ENCODE measurements at regions of chr6 and their contacts with region 1.

Region 1: DNA sequence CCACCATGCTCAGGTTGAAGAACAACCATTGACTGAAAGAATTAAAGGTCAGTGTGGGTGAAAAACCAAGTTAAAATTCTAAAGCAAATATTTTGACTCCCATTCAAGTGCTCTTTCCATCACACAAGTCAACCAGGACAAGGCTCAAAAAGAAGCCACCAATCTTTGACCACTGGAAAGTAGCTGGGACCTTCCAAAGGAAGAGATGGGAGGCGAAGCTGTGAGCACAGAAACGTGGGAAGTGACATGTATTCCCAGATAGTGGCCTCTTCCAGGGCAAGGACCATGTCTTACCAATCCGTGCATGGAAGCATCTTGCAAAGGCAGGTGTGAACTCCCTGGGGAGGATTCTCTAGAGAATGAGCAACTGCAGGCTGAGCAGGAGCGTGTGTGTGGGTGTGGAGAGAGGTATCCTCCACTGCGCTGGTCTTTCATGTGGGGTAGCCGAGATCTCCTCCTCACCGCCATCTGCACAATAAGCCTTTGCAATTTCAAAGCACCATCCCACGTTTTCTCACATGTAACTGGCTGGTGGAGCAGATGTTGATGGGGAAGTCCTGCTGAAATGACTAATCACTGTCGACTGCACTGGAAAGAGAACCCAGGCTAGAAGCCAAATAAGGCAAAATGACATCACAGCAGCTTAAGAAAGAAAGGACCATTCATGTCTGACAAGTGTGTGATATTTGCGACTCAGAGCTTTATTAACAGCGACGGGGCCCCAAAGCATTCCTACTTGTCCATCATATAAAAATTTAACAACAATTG is 189.4 kb upstream of the RREB1 start:
- DNase-seq: peak; percentile 91
- ATAC-seq: peak; percentile 96
- H3K4me3 ChIP-seq: no peak overlapping the region
- H3K27ac ChIP-seq: peak overlapping the region; percentile 30; the same call in 1 of the 2 replicates
- H3K4me1 ChIP-seq: peaks cover 27% of the 10 kb centered on the region
- H3K27me3 ChIP-seq: no peaks in the 10 kb centered on the region
- CTCF ChIP-seq: no peak
- EP300 ChIP-seq: peak; percentile 99
- POLR2A ChIP-seq: no peak
- RAD21 ChIP-seq: peak; percentile 31; the same call in 1 of the 2 replicates

Region 2: DNA sequence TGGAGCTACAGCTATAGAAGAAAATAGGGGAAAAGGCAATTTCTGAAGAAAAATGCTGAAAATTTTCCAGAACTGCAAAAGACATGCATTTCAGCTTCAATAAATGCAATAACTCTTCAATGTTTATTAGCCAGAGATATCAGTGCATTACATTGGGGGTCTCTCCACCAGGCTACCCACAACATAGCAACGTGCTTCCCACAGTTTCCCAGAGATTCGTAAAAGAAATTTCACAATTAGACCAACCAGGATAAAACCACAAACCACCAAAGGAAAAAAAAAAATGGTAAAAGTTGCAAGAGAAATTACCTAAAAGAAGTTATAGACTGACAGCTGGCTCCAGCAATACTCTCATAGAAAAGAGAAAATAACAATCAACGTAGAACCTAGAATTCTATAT is 313.8 kb before region 1 on chr6:
- CTCF ChIA-PET with region 1: no interaction called
- POLR2A ChIA-PET with region 1: no interaction called
- RAD21 ChIA-PET with region 1: no interaction called
- SMC1A ChIA-PET with region 1: no interaction called
- in situ Hi-C with region 1: no loop called
- intact Hi-C with region 1: no loop called
- DNase-seq: no peak
- ATAC-seq: no peak
- H3K4me3 ChIP-seq: no peak overlapping the region
- H3K27ac ChIP-seq: no peak overlapping the region
- H3K4me1 ChIP-seq: peaks cover 6% of the 10 kb centered on the region
- H3K27me3 ChIP-seq: no peaks in the 10 kb centered on the region
- CTCF ChIP-seq: no peak
- EP300 ChIP-seq: no peak
- POLR2A ChIP-seq: no peak
- RAD21 ChIP-seq: no peak

Region 3: DNA sequence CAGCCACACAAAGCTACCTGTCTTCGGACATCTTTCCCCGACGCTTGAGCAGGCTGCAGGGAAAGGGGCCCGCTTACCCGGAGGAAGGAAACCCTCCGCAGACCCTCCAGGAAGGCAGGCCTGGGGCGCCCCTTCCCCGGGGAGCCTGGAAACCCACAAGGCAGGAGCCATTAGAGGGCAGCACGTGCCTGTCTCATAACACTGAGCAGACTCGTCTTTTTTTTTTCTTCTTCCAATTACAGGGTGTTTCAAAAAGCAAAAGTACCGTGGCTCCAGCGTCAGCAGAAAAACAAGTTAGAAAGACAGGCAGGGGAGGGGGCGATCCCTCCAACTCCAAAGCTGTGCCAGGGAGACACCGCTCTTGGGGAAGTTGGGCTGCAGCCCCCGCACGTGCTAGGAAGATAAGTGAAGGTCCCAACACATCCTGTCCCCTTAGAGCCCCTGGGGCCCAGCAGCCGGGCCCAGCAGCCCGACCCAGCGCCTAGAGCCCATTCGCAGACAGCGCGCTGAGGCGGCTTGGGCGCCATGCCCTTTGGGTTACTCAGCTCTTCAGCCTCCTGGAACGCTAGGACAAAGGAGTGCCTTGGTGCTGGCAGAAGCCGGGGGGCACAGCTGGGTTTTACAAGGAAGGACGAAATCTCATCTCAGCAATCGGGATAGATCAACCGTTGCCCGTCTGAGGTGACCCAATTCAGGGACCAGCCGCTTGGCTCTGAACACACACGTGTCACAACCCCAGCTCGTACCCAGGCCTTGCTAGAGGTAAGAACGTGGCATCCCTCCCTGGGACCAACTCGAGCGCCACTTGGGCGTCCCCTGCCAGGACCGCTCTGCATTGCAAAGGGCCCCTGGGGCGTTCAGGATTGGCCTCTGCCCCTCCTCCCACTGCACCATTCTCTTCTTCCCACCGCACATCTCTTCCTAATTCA is 193.6 kb before region 1 on chr6:
- CTCF ChIA-PET with region 1: interaction called, 4 read pairs
- POLR2A ChIA-PET with region 1: no interaction called
- RAD21 ChIA-PET with region 1: interaction called, 5 read pairs
- SMC1A ChIA-PET with region 1: interaction called, 4 read pairs
- in situ Hi-C with region 1: no loop called
- intact Hi-C with region 1: loop called (anchors 10 kb)
- DNase-seq: no peak
- ATAC-seq: peak; percentile 91
- H3K4me3 ChIP-seq: peak overlapping the region; percentile 37; the same call in 1 of the 2 replicates
- H3K27ac ChIP-seq: no peak overlapping the region
- H3K4me1 ChIP-seq: peaks cover 11% of the 10 kb centered on the region
- H3K27me3 ChIP-seq: no peaks in the 10 kb centered on the region
- CTCF ChIP-seq: peak; percentile 65 to 82 (median 70)
- EP300 ChIP-seq: no peak
- POLR2A ChIP-seq: no peak
- RAD21 ChIP-seq: peak; percentile 87

Region 4: GRCh38 chr6:6788394-6789020 is 129.9 kb before region 1 on chr6:
- CTCF ChIA-PET with region 1: interaction called, 7 read pairs
- POLR2A ChIA-PET with region 1: no interaction called
- RAD21 ChIA-PET with region 1: interaction called, 9 read pairs
- SMC1A ChIA-PET with region 1: interaction called, 13 read pairs
- in situ Hi-C with region 1: no loop called
- intact Hi-C with region 1: no loop called
- DNase-seq: no peak
- ATAC-seq: peak; percentile 92
- H3K4me3 ChIP-seq: no peak overlapping the region
- H3K27ac ChIP-seq: no peak overlapping the region
- H3K4me1 ChIP-seq: no peaks in the 10 kb centered on the region
- H3K27me3 ChIP-seq: no peaks in the 10 kb centered on the region
- CTCF ChIP-seq: peak; percentile 48 to 83 (median 78)
- EP300 ChIP-seq: no peak
- POLR2A ChIP-seq: no peak
- RAD21 ChIP-seq: peak; percentile 90

Region 5: GRCh38 chr6:6803572-6803971 is 114.8 kb before region 1 on chr6:
- CTCF ChIA-PET with region 1: interaction called, 3 read pairs
- POLR2A ChIA-PET with region 1: interaction called, 5 read pairs
- RAD21 ChIA-PET with region 1: interaction called, 7 read pairs
- SMC1A ChIA-PET with region 1: interaction called, 17 read pairs
- in situ Hi-C with region 1: no loop called
- intact Hi-C with region 1: loop called (anchors 5 kb)
- DNase-seq: no peak
- ATAC-seq: peak; percentile 77
- H3K4me3 ChIP-seq: no peak overlapping the region
- H3K27ac ChIP-seq: no peak overlapping the region
- H3K4me1 ChIP-seq: peaks cover 60% of the 10 kb centered on the region
- H3K27me3 ChIP-seq: no peaks in the 10 kb centered on the region
- CTCF ChIP-seq: no peak
- EP300 ChIP-seq: no peak
- POLR2A ChIP-seq: no peak
- RAD21 ChIP-seq: no peak

Region 6: DNA sequence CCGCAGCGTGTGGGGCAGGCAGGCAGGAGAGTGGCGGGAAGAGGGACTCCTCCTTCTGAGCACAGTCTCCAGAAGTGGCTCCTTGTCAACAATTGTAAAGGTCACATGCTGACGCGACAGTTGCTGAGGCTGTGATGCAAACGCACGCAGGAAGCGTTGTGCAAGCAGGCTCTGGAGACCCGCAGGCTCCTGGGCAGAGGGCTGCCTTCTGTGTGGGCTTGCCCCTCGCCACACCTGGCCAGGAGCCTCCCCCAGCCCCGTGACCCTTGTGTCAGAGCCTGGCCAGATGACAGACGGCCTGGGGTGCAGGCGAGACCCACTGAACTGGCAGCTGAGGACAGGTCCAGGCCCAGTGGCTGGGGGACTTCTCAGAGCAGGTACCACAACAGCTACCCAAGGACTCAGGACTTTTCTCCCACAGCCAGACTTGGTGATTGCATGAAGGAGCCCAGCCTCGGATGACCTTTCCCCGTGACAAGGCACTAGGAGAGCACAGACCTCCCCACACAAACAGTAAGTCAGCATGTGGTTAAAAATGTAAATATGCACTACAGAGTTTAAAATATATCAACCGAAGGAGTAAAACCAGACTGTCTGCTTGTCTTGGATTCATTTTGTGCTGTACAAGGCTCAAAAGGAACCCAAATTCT is 32.8 kb before region 1 on chr6:
- CTCF ChIA-PET with region 1: no interaction called
- POLR2A ChIA-PET with region 1: no interaction called
- RAD21 ChIA-PET with region 1: no interaction called
- SMC1A ChIA-PET with region 1: no interaction called
- in situ Hi-C with region 1: no loop called
- intact Hi-C with region 1: no loop called
- DNase-seq: no peak
- ATAC-seq: no peak
- H3K4me3 ChIP-seq: no peak overlapping the region
- H3K27ac ChIP-seq: no peak overlapping the region
- H3K4me1 ChIP-seq: no peaks in the 10 kb centered on the region
- H3K27me3 ChIP-seq: no peaks in the 10 kb centered on the region
- CTCF ChIP-seq: no peak
- EP300 ChIP-seq: no peak
- POLR2A ChIP-seq: no peak
- RAD21 ChIP-seq: no peak

Region 7: DNA sequence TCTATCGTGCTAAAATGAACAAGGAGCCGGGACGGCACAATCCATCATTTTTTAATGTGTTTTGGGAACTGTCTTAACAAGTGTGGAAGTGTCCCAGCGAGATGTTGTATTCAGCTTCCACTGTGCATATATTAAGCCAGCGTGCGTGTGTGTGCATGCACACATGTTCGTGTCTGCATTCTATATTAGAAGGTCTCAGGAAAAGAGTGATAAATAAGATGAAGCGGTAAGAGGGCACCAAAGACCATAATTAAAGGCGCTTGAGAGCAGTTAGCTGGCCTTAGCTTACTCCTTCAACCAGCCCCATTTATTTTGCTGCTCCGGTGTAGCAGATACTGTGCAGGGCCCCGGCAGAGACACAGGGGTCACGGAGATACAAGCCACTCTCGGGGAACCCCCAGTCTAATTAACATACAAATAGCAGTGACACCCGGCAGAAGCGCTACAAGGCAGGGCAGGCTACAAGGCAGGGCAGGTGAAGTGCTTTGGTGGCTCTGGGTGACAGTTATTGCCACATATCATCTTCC is 17.1 kb before region 1 on chr6:
- CTCF ChIA-PET with region 1: interaction called, 6 read pairs
- POLR2A ChIA-PET with region 1: no interaction called
- RAD21 ChIA-PET with region 1: interaction called, 5 read pairs
- SMC1A ChIA-PET with region 1: interaction called, 14 read pairs
- in situ Hi-C with region 1: no loop called
- intact Hi-C with region 1: no loop called
- DNase-seq: no peak
- ATAC-seq: peak; percentile 78
- H3K4me3 ChIP-seq: no peak overlapping the region
- H3K27ac ChIP-seq: no peak overlapping the region
- H3K4me1 ChIP-seq: no peaks in the 10 kb centered on the region
- H3K27me3 ChIP-seq: peaks cover 0 to 2% of the 10 kb centered on the region in 2 experiments; a peak in 1 of 4 replicates
- CTCF ChIP-seq: no peak; a peak in 1 of 6 replicates
- EP300 ChIP-seq: no peak
- POLR2A ChIP-seq: no peak
- RAD21 ChIP-seq: no peak

Measured in GM12878 (cell line).